ENCODE measurements at regions of chr5 and their contacts with region 1.

Region 1: GRCh38 chr5:58891096-58891970 is 308.5 kb downstream of the RAB3C start:
- DNase-seq: peak; percentile 84
- H3K27ac ChIP-seq: peak overlapping the region; percentile 78
- CTCF ChIP-seq: peak; percentile 90

Region 2: DNA sequence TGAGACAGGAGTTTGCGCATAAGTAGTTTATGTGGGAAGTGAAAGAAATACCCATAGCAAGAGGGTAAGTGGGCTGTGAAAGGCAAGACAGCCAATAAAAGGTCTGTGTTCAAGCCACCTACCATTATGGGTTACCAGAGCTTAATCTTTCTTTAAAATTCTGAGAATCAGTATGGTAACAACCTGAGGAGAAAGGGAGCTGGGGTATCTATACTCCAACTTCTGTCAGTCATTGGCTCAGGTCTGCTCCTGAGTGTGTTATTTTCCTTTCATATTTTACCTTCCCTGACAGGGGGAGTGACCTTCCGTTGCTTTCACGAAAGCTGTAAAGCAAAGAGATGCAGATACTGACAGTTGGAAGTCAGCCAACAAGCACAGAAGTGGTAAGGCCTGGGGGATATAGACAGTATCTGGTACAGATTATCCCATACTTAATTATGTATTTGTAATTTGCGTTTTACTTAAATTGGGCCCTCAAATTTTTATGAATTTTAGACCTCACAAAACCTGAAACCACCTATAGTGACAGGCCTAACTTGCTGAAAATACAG is 75.1 kb before region 1 on chr5:
- CTCF ChIA-PET with region 1: no interaction called
- POLR2A ChIA-PET with region 1: no interaction called
- DNase-seq: no peak
- H3K27ac ChIP-seq: no peak overlapping the region
- CTCF ChIP-seq: no peak

Region 3: GRCh38 chr5:58855851-58856739 is 35.2 kb before region 1 on chr5:
- CTCF ChIA-PET with region 1: no interaction called
- POLR2A ChIA-PET with region 1: no interaction called
- DNase-seq: no peak
- H3K27ac ChIP-seq: no peak overlapping the region
- CTCF ChIP-seq: no peak

Region 4: GRCh38 chr5:58905944-58906343 is 14.6 kb after region 1 on chr5:
- CTCF ChIA-PET with region 1: interaction called, 10 read pairs
- POLR2A ChIA-PET with region 1: no interaction called
- DNase-seq: no peak
- H3K27ac ChIP-seq: no peak overlapping the region
- CTCF ChIP-seq: no peak

Region 5: DNA sequence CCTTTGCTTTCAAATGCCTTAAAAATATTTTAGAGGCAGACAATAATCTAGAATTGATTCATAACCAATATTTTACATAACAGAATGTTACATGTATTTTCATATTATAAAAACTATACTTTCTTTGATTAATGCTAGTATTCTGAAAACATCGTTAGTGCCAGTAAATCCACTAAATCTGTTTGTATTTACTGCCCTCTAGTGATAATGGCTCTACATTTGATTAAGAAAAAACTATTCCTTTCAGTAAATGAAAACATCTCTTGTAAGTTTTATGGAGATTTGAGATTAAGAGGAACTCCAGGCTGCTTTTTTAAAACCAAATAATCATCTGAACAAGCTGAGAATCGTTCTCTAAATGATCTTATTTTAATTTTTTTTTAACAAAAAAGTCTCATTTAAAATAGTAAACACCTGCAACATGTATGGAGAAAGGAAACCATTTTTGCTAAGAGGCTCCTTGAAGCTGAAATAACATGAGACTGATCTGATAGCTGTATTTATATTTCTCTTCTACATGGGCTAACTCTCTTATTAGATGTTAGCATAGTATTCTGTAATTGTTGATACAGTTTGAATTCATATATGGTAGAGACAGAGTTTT is 116.2 kb after region 1 on chr5:
- CTCF ChIA-PET with region 1: interaction called, 15 read pairs
- POLR2A ChIA-PET with region 1: no interaction called
- DNase-seq: peak; percentile 46
- H3K27ac ChIP-seq: no peak overlapping the region
- CTCF ChIP-seq: peak; percentile 69